ENCODE measurements at regions of chr2 and their contacts with region 1.

Region 1: GRCh38 chr2:114283774-114284173 is 158.7 kb upstream of the DPP10 start:
- DNase-seq: no peak
- H3K4me3 ChIP-seq: no peak overlapping the region
- H3K27ac ChIP-seq: peak overlapping the region; percentile 68 to 79
- H3K4me1 ChIP-seq: peaks cover 0 to 10% of the 10 kb centered on the region in 2 donors
- H3K27me3 ChIP-seq: no peaks in the 10 kb centered on the region
- CTCF ChIP-seq: no peak

Region 2: GRCh38 chr2:114034742-114035141 is 249.0 kb before region 1 on chr2:
- intact Hi-C with region 1: no loop called
- DNase-seq: no peak
- H3K4me3 ChIP-seq: no peak overlapping the region
- H3K27ac ChIP-seq: no peak overlapping the region
- H3K4me1 ChIP-seq: no peaks in the 10 kb centered on the region
- H3K27me3 ChIP-seq: no peaks in the 10 kb centered on the region
- CTCF ChIP-seq: no peak

Region 3: DNA sequence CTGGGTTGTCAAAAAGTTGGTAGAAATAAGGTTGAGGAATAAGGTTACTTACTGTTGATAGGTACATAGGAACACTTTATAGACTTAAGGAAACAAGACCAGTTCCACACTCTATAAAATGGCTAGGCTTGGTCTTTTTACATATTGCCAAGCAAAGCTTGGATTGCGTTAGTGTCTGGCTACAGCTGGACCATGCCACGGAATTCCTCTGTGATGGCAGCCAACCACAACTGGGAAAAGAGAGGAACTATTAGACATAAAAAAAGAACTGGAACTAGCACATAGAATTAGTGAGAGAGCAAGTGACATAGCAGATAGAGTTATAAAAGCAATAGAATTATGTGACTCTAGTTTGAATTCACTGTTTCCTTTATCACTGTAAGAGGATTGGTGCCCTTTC is 140.9 kb after region 1 on chr2:
- intact Hi-C with region 1: loop called (anchors 5 kb)
- DNase-seq: peak in 1 of 2 donors; percentile 67
- H3K4me3 ChIP-seq: no peak overlapping the region
- H3K27ac ChIP-seq: peak overlapping the region; percentile 76 to 81
- H3K4me1 ChIP-seq: peaks cover 7 to 10% of the 10 kb centered on the region in 2 donors
- H3K27me3 ChIP-seq: no peaks in the 10 kb centered on the region
- CTCF ChIP-seq: no peak

Region 4: GRCh38 chr2:114515882-114516281 is 232.1 kb after region 1 on chr2:
- intact Hi-C with region 1: no loop called
- DNase-seq: no peak
- H3K4me3 ChIP-seq: no peak overlapping the region
- H3K27ac ChIP-seq: no peak overlapping the region
- H3K4me1 ChIP-seq: no peaks in the 10 kb centered on the region
- H3K27me3 ChIP-seq: no peaks in the 10 kb centered on the region
- CTCF ChIP-seq: no peak